GM12878 (cell line): ENCODE measurements at regions of chr1 and their contacts with region 1.

Region 1: DNA sequence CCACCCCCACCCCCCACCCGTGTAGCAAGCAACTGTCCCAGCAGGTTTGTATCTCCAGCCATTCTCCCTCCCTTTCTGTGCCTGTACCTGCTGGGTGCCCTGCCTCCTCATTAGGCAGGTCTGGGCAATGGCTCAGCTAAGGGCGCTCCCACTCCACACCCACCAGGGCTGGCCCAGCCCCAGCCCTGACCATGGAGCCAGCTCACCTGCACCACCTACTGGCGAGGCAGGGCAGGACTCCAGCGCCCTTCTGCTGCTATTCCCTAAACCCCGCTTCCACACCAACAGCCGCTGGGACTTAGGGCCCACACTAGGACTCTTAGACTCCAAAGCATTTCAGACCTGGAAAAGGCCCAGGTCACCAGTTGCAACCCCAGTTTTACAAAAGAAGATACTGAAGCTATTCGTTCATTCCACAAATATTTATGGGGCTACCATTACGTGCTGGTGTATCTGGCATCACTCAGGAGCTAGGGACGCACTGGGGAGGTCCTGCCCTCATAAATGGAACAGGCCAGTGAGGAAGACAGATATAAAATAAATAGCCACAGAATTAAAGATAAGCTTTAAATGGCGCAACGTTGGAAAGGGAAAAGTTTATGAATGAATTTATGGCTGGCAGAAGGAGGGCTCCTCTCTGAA is 24.0 kb downstream of the PGLYRP3 start:
- DNase-seq: no peak
- ATAC-seq: peak; percentile 82
- H3K4me3 ChIP-seq: no peak overlapping the region
- H3K27ac ChIP-seq: no peak overlapping the region
- H3K4me1 ChIP-seq: peaks cover 9% of the 10 kb centered on the region
- H3K27me3 ChIP-seq: peaks cover 0 to 2% of the 10 kb centered on the region in 2 experiments; a peak in 1 of 4 replicates
- CTCF ChIP-seq: peak; percentile 61 to 86 (median 78)
- EP300 ChIP-seq: no peak
- POLR2A ChIP-seq: no peak
- RAD21 ChIP-seq: peak; percentile 29; the same call in 1 of the 2 replicates

Region 2: GRCh38 chr1:153231363-153231762 is 57.4 kb before region 1 on chr1:
- CTCF ChIA-PET with region 1: interaction called, 66 read pairs
- POLR2A ChIA-PET with region 1: no interaction called
- RAD21 ChIA-PET with region 1: interaction called, 9 read pairs
- SMC1A ChIA-PET with region 1: interaction called, 17 read pairs
- in situ Hi-C with region 1: no loop called
- intact Hi-C with region 1: no loop called
- DNase-seq: no peak
- ATAC-seq: no peak
- H3K4me3 ChIP-seq: no peak overlapping the region
- H3K27ac ChIP-seq: no peak overlapping the region
- H3K4me1 ChIP-seq: no peaks in the 10 kb centered on the region
- H3K27me3 ChIP-seq: no peaks in the 10 kb centered on the region; a peak in 1 of 4 replicates
- CTCF ChIP-seq: no peak
- EP300 ChIP-seq: no peak
- POLR2A ChIP-seq: no peak
- RAD21 ChIP-seq: no peak

Region 3: GRCh38 chr1:153253693-153254092 is 35.1 kb before region 1 on chr1:
- CTCF ChIA-PET with region 1: interaction called, 24 read pairs
- POLR2A ChIA-PET with region 1: no interaction called
- RAD21 ChIA-PET with region 1: interaction called, 3 read pairs
- SMC1A ChIA-PET with region 1: interaction called, 5 read pairs
- in situ Hi-C with region 1: no loop called
- intact Hi-C with region 1: no loop called
- DNase-seq: no peak
- ATAC-seq: peak; percentile 92
- H3K4me3 ChIP-seq: no peak overlapping the region
- H3K27ac ChIP-seq: no peak overlapping the region
- H3K4me1 ChIP-seq: no peaks in the 10 kb centered on the region
- H3K27me3 ChIP-seq: no peaks in the 10 kb centered on the region
- CTCF ChIP-seq: no peak
- EP300 ChIP-seq: no peak
- POLR2A ChIP-seq: no peak
- RAD21 ChIP-seq: no peak

Region 4: DNA sequence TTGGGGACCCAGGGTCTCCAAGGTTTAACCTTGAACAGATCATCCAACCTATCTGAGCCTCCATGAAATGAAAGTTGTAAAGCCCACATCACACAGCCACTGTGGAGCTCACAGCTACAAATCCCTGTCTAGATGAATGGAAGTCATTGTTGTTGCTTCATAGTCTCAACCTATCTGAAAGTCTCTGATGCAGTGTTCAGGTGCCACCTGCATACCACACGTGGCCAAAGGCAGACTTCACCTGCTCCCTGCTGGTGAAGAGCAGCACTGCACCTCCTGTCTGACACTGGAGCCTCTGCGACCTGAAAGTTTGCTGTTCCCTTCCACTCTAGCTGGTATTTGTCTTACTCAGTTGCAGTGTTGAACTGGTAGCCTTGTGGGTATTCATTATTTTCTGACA is 10.9 kb before region 1 on chr1:
- CTCF ChIA-PET with region 1: interaction called, 33 read pairs
- POLR2A ChIA-PET with region 1: no interaction called
- RAD21 ChIA-PET with region 1: interaction called, 5 read pairs
- SMC1A ChIA-PET with region 1: interaction called, 13 read pairs
- in situ Hi-C with region 1: no loop called
- intact Hi-C with region 1: no loop called
- DNase-seq: no peak
- ATAC-seq: peak; percentile 99
- H3K4me3 ChIP-seq: no peak overlapping the region
- H3K27ac ChIP-seq: no peak overlapping the region
- H3K4me1 ChIP-seq: peaks cover under 1% of the 10 kb centered on the region; the same call in 1 of the 2 replicates
- H3K27me3 ChIP-seq: no peaks in the 10 kb centered on the region
- CTCF ChIP-seq: peak; percentile 87 to 91 (median 90)
- EP300 ChIP-seq: no peak
- POLR2A ChIP-seq: no peak
- RAD21 ChIP-seq: peak; percentile 70

Region 5: GRCh38 chr1:153337980-153338853 is 49.5 kb after region 1 on chr1:
- CTCF ChIA-PET with region 1: interaction called, 20 read pairs
- POLR2A ChIA-PET with region 1: interaction called, 3 read pairs
- RAD21 ChIA-PET with region 1: interaction called, 26 read pairs
- SMC1A ChIA-PET with region 1: interaction called, 16 read pairs
- in situ Hi-C with region 1: no loop called
- intact Hi-C with region 1: no loop called
- DNase-seq: no peak
- ATAC-seq: no peak
- H3K4me3 ChIP-seq: no peak overlapping the region
- H3K27ac ChIP-seq: no peak overlapping the region
- H3K4me1 ChIP-seq: peaks cover 9% of the 10 kb centered on the region
- H3K27me3 ChIP-seq: no peaks in the 10 kb centered on the region
- CTCF ChIP-seq: no peak
- EP300 ChIP-seq: no peak
- POLR2A ChIP-seq: no peak
- RAD21 ChIP-seq: no peak

Region 6: GRCh38 chr1:153352523-153352922 is 63.8 kb after region 1 on chr1:
- CTCF ChIA-PET with region 1: interaction called, 17 read pairs
- POLR2A ChIA-PET with region 1: no interaction called
- RAD21 ChIA-PET with region 1: interaction called, 7 read pairs
- SMC1A ChIA-PET with region 1: interaction called, 6 read pairs
- in situ Hi-C with region 1: no loop called
- intact Hi-C with region 1: no loop called
- DNase-seq: no peak
- ATAC-seq: peak; percentile 73
- H3K4me3 ChIP-seq: no peak overlapping the region
- H3K27ac ChIP-seq: no peak overlapping the region
- H3K4me1 ChIP-seq: peaks cover 12% of the 10 kb centered on the region
- H3K27me3 ChIP-seq: no peaks in the 10 kb centered on the region
- CTCF ChIP-seq: peak; percentile 80 to 88 (median 83)
- EP300 ChIP-seq: no peak
- POLR2A ChIP-seq: no peak
- RAD21 ChIP-seq: peak; percentile 82